PC-3 (cell line): ENCODE measurements at regions of chr3 and their contacts with region 1.

Region 1: DNA sequence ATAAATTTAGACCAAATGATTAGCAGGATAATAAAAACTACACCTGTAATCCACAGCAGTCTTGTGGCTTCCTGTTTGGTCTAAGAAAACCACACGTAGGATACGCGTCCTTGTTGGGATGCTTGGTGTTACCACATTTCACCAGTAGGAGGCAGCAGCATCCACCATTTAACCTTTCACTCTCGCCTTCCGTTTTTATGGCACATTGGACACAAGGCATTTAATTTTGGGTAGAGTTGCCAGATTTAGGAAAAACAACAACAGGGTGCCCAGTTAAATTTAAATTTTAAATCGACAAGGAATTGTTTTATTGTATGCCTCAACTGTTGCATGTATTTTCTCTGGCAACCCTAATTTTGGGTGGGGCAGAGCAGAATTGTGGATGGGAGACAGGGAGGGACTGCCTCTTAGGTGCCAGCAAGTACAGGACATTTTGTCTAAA is 6.3 kb downstream of the LRRC31 start:
- DNase-seq: peak; percentile 92
- ATAC-seq: peak; percentile 89
- H3K4me3 ChIP-seq: no peak overlapping the region
- H3K27ac ChIP-seq: no peak overlapping the region
- H3K4me1 ChIP-seq: no peaks in the 10 kb centered on the region
- H3K27me3 ChIP-seq: no peaks in the 10 kb centered on the region
- CTCF ChIP-seq: peak; percentile 97

Region 2: GRCh38 chr3:169454823-169455222 is 408.7 kb before region 1 on chr3:
- CTCF ChIA-PET with region 1: no interaction called
- POLR2A ChIA-PET with region 1: no interaction called
- intact Hi-C with region 1: no loop called
- DNase-seq: peak; percentile 82
- ATAC-seq: peak; percentile 77
- H3K4me3 ChIP-seq: no peak overlapping the region
- H3K27ac ChIP-seq: peak overlapping the region; percentile 75
- H3K4me1 ChIP-seq: peaks cover 25% of the 10 kb centered on the region
- H3K27me3 ChIP-seq: no peaks in the 10 kb centered on the region
- CTCF ChIP-seq: no peak

Region 3: GRCh38 chr3:169764452-169765274 is 98.8 kb before region 1 on chr3 and contains the start of gene TERC:
- CTCF ChIA-PET with region 1: no interaction called
- POLR2A ChIA-PET with region 1: interaction called, 4 read pairs
- intact Hi-C with region 1: loop called (anchors 5 kb)
- DNase-seq: peak; percentile 97
- ATAC-seq: peak; percentile 85
- H3K4me3 ChIP-seq: peak within 1 kb of the TSS; percentile 81
- H3K27ac ChIP-seq: peak within 1 kb of the TSS; percentile 82
- H3K4me1 ChIP-seq: peaks cover 9% of the 10 kb centered on the region
- H3K27me3 ChIP-seq: no peaks in the 10 kb centered on the region
- CTCF ChIP-seq: no peak
- total RNA-seq, gene TERC: 544 and 737 TPM in 2 replicates